Activated B cell treated with CpG ODN at 0.5 μM for 24 hours (primary cell): ENCODE measurements at regions of chr11 and their contacts with region 1.

Region 1: DNA sequence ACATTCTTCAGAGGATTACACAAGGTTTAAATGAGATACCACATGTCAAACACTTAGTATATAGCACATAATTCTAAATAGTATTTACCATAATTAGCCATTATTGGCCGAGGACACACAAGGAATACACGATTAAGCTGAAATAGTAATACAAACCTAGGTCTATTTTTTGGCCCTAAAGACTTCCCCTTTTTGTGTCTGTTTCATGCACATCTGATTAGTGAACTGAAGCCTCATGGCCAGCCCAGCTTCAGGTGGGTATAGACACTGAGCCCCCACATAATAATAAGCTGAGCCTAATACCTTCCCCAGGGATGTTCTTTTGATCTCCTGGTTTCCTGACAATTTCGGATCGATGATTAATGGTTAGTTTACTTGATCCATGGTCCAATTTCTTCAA is 2.1 kb downstream of the GLYATL1B start:
- DNase-seq: no peak
- ATAC-seq: peak; percentile 95
- H3K4me3 Mint-ChIP-seq: no peak overlapping the region
- H3K27ac Mint-ChIP-seq: peak overlapping the region; percentile 81
- H3K4me1 Mint-ChIP-seq: peaks cover 55% of the 10 kb centered on the region
- H3K27me3 Mint-ChIP-seq: no peaks in the 10 kb centered on the region
- CTCF ChIP-seq: no peak

Region 2: GRCh38 chr11:59040607-59041006 is 47.6 kb before region 1 on chr11:
- CTCF ChIA-PET with region 1: no interaction called
- POLR2A ChIA-PET with region 1: no interaction called
- intact Hi-C with region 1: loop called (anchors 2 kb)
- DNase-seq: no peak
- ATAC-seq: no peak
- H3K4me3 Mint-ChIP-seq: no peak overlapping the region
- H3K27ac Mint-ChIP-seq: no peak overlapping the region
- H3K4me1 Mint-ChIP-seq: peaks cover 14% of the 10 kb centered on the region
- H3K27me3 Mint-ChIP-seq: no peaks in the 10 kb centered on the region
- CTCF ChIP-seq: no peak

Region 3: GRCh38 chr11:59076876-59077571 is 11.1 kb before region 1 on chr11:
- CTCF ChIA-PET with region 1: no interaction called
- POLR2A ChIA-PET with region 1: interaction called, 7 read pairs
- intact Hi-C with region 1: loop called (anchors 1 kb)
- DNase-seq: no peak
- ATAC-seq: peak; percentile 95
- H3K4me3 Mint-ChIP-seq: peak overlapping the region; percentile 56
- H3K27ac Mint-ChIP-seq: peak overlapping the region; percentile 78
- H3K4me1 Mint-ChIP-seq: peaks cover 59% of the 10 kb centered on the region
- H3K27me3 Mint-ChIP-seq: no peaks in the 10 kb centered on the region
- CTCF ChIP-seq: no peak

Region 4: GRCh38 chr11:59106363-59107336 is 18.5 kb after region 1 on chr11 and contains the start of gene FAM111B:
- CTCF ChIA-PET with region 1: no interaction called
- POLR2A ChIA-PET with region 1: interaction called, 5 read pairs
- intact Hi-C with region 1: loop called (anchors 2 kb)
- DNase-seq: peak; percentile 43
- ATAC-seq: peak; percentile 33
- H3K4me3 Mint-ChIP-seq: peak within 1 kb of the TSS; percentile 94
- H3K27ac Mint-ChIP-seq: peak within 1 kb of the TSS; percentile 84
- H3K4me1 Mint-ChIP-seq: peaks cover 84% of the 10 kb centered on the region
- H3K27me3 Mint-ChIP-seq: no peaks in the 10 kb centered on the region
- CTCF ChIP-seq: no peak
- total RNA-seq, gene FAM111B: 48.0 and 49.1 TPM in 2 replicates